ENCODE measurements at regions of chr16 and their contacts with region 1.

Region 1: GRCh38 chr16:88785106-88785924 is at the start of gene PIEZO1:
- DNase-seq: peak; percentile 80
- H3K4me3 Mint-ChIP-seq: peak within 1 kb of the TSS; percentile 82
- H3K27ac Mint-ChIP-seq: peak within 1 kb of the TSS; percentile 87
- H3K4me1 Mint-ChIP-seq: peaks cover 43% of the 10 kb centered on the region
- H3K27me3 Mint-ChIP-seq: peaks cover 4% of the 10 kb centered on the region
- total RNA-seq, gene PIEZO1: 214 and 217 TPM in 2 replicates

Region 2: GRCh38 chr16:88633684-88634140 is 151.6 kb before region 1 on chr16:
- intact Hi-C with region 1: loop called (anchors 5 kb)
- DNase-seq: peak; percentile 17
- H3K4me3 Mint-ChIP-seq: peak overlapping the region; percentile 64
- H3K27ac Mint-ChIP-seq: no peak overlapping the region
- H3K4me1 Mint-ChIP-seq: peaks cover 21% of the 10 kb centered on the region
- H3K27me3 Mint-ChIP-seq: peaks cover 17% of the 10 kb centered on the region

Region 3: GRCh38 chr16:88737298-88738150 is 47.8 kb before region 1 on chr16:
- intact Hi-C with region 1: loop called (anchors 1 kb)
- DNase-seq: peak; percentile 49
- H3K4me3 Mint-ChIP-seq: no peak overlapping the region
- H3K27ac Mint-ChIP-seq: no peak overlapping the region
- H3K4me1 Mint-ChIP-seq: no peaks in the 10 kb centered on the region
- H3K27me3 Mint-ChIP-seq: no peaks in the 10 kb centered on the region

Region 4: DNA sequence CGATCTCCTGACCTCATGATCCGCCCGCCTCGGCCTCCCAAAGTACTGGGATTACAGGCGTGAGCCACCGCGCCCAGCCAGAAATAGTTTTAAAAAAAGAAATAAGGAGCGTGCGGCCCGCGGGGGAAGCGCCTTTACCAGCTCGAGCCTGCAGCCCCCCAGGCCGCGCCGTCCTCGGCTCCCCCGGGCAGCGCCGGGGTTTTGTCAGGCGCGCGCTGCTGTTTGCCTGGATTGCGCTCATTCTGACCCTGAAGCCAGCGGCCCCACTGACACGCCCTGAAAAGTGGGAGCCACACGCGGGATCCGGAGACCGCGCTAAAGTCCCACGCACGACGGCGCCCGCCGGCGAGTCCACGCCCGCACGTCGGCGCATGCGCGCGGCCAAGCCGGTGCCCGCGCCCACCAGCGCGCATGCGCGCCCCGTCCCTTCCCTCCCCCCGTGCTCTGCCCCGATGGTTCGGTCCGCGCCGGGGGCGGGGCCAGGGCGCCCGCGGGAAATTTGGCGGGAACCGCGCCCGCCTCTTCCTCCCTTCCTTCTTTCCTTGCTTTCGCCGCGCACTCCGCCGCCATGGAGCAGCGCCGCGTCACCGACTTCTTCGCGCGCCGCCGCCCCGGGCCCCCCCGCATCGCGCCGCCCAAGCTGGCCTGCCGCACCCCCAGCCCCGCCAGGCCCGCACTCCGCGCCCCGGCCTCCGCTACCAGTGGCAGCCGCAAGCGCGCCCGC is 18.1 kb after region 1 on chr16 and contains the start of gene CDT1:
- intact Hi-C with region 1: loop called (anchors 1 kb)
- DNase-seq: peak; percentile 84
- H3K4me3 Mint-ChIP-seq: peak within 1 kb of the TSS; percentile 85
- H3K27ac Mint-ChIP-seq: peak within 1 kb of the TSS; percentile 84
- H3K4me1 Mint-ChIP-seq: peaks cover 15% of the 10 kb centered on the region
- H3K27me3 Mint-ChIP-seq: no peaks in the 10 kb centered on the region
- total RNA-seq, gene CDT1: 95.4 and 97.3 TPM in 2 replicates

Region 5: GRCh38 chr16:89490387-89491237 is 705.3 kb after region 1 on chr16 and contains the start of gene ANKRD11:
- intact Hi-C with region 1: loop called (anchors 5 kb)
- DNase-seq: peak; percentile 99
- H3K4me3 Mint-ChIP-seq: peak within 1 kb of the TSS; percentile 96
- H3K27ac Mint-ChIP-seq: peak within 1 kb of the TSS; percentile 99
- H3K4me1 Mint-ChIP-seq: peaks cover 52% of the 10 kb centered on the region
- H3K27me3 Mint-ChIP-seq: no peaks in the 10 kb centered on the region
- total RNA-seq, gene ANKRD11: 176 and 179 TPM in 2 replicates